Common myeloid progenitor, CD34-positive (primary cell): ENCODE measurements at regions of chr11 and their contacts with region 1.

Region 1: DNA sequence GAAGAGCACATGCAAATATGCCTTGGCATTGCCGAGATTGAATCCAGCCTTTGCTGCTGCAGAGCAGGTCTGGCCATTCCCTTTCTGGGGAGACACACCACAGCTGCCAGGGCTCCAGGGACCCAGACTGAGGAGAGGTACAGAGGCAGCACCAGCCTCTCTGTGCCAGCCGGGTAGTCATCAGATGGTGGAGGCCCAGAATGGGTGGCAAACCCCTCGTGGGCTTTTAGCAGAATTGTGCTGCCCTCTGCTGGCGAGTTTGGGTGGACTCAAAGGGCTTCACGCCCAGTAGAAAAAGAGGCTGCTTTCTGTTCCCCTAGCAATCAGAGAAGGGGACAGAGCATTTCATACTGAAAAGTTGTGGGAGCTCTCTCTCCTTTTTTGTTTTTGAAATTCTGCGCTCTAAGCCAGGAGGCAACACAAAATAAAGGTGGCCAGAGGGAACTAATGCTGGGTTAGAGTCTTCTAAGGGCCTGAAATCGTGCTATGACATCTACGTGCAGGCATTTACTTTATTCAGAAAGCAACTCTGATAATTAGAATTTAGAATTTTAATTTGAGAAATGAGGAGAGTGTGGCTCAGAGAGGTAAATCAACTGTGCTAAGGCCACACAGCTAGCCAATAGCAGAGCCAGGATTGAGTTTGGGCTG is 158.8 kb upstream of the NAV2 start:
- DNase-seq: peak; percentile 69 to 89 (median 84)
- H3K4me3 ChIP-seq: no peak overlapping the region
- H3K27ac ChIP-seq: no peak overlapping the region
- H3K4me1 ChIP-seq: peaks cover 0 to 7% (median 0%) of the 10 kb centered on the region in 4 experiments
- H3K27me3 ChIP-seq: peaks cover 0 to 8% (median 3%) of the 10 kb centered on the region in 5 experiments

Region 2: GRCh38 chr11:19071255-19071654 is 482.6 kb before region 1 on chr11:
- CTCF ChIA-PET with region 1: interaction called, 136 read pairs
- POLR2A ChIA-PET with region 1: no interaction called
- DNase-seq: peak; percentile 78 to 88 (median 88)
- H3K4me3 ChIP-seq: peak overlapping the region in 5 of 7 experiments; percentile 15 to 75 (median 45)
- H3K27ac ChIP-seq: no peak overlapping the region
- H3K4me1 ChIP-seq: no peaks in the 10 kb centered on the region
- H3K27me3 ChIP-seq: no peaks in the 10 kb centered on the region

Region 3: DNA sequence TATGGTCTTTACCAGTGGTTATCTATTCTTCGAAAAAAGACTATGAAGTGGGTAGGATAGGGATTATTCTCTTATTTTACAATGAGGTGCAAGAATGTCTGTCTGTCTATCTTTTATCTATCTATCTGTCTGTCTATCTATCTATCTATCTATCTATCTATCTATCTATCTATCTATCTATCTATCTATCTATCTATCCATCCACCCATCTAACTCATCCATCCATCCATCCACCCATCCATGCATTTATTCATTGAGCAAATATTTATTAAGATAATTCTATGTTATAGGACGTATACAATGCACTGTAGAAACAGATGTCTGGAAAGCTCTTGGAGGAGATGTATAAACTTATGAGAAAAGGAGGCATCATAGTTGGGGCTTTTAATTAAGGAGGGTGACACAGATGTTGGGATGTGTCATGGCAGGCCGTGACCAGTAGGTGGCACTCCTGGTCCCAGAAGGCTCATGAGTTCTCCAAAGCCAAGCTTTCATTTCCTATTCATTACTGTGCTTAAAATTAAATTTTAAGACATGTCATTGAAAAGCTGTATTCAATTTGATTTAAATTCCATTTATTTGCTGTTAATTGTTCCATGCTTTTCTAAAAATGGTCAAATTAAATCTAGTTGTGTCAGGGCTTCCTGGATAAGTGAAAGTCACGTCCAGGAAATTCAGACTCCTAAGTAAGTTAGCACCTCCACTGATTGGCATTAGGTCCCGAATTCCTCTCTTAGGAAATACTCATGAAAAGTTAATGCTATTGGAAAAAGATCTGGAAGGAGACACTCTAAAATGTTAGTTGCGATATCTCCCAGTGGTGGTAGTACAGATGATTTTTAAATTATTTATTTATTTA is 294.1 kb before region 1 on chr11:
- CTCF ChIA-PET with region 1: interaction called, 16 read pairs
- POLR2A ChIA-PET with region 1: no interaction called
- DNase-seq: peak; percentile 61 to 82 (median 74)
- H3K4me3 ChIP-seq: peak overlapping the region in 1 of 7 experiments; percentile 39
- H3K27ac ChIP-seq: no peak overlapping the region
- H3K4me1 ChIP-seq: peaks cover 0 to 1% (median 0%) of the 10 kb centered on the region in 4 experiments
- H3K27me3 ChIP-seq: peaks cover 0 to 2% (median 0%) of the 10 kb centered on the region in 5 experiments

Region 4: DNA sequence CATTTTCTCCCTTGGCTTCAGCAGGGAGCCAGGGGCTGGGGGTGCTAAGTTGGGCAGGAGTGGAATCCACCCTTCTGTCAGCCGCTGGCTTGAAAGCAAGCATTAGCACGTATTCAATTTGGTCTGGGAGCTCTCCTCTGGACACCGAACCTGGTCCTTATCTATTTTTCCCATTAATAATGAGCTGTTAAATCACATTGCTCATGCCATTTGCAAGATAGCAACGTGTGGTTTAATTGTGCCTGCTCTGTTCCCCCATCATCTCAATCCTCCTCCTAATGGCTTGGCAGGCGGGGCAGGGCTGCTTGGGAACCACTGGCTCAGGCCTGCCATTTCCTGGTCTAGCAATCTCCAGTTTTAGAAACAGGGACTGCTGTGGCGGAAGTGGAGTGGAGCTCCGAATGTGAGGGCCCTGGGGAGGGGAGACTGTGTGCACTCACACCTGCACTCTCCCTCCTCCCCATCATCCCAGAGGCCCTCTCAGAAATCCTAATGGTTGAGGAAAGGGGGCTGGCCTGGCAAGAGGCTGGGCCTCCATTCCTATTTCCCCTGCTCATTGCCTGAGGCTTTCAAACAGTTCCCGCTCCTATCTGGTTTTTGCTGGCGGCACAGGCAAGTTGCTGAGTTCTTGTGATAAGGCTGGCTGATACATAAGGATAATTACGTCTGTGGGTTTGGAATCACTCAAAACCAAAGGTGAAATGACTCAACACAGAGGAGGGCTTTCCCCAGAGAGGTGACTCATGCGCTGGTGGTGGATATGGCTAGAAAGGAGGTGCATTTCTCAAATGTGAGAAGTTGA is 111.9 kb before region 1 on chr11:
- CTCF ChIA-PET with region 1: no interaction called
- POLR2A ChIA-PET with region 1: no interaction called
- DNase-seq: peak; percentile 13 to 61 (median 46)
- H3K4me3 ChIP-seq: no peak overlapping the region
- H3K27ac ChIP-seq: no peak overlapping the region
- H3K4me1 ChIP-seq: no peaks in the 10 kb centered on the region
- H3K27me3 ChIP-seq: peaks cover 0 to 8% (median 0%) of the 10 kb centered on the region in 5 experiments

Region 5: GRCh38 chr11:19536131-19536530 is 17.7 kb before region 1 on chr11:
- CTCF ChIA-PET with region 1: interaction called, 11 read pairs
- POLR2A ChIA-PET with region 1: no interaction called
- DNase-seq: no peak
- H3K4me3 ChIP-seq: no peak overlapping the region
- H3K27ac ChIP-seq: no peak overlapping the region
- H3K4me1 ChIP-seq: no peaks in the 10 kb centered on the region
- H3K27me3 ChIP-seq: peaks cover 0 to 4% (median 0%) of the 10 kb centered on the region in 5 experiments

Region 6: DNA sequence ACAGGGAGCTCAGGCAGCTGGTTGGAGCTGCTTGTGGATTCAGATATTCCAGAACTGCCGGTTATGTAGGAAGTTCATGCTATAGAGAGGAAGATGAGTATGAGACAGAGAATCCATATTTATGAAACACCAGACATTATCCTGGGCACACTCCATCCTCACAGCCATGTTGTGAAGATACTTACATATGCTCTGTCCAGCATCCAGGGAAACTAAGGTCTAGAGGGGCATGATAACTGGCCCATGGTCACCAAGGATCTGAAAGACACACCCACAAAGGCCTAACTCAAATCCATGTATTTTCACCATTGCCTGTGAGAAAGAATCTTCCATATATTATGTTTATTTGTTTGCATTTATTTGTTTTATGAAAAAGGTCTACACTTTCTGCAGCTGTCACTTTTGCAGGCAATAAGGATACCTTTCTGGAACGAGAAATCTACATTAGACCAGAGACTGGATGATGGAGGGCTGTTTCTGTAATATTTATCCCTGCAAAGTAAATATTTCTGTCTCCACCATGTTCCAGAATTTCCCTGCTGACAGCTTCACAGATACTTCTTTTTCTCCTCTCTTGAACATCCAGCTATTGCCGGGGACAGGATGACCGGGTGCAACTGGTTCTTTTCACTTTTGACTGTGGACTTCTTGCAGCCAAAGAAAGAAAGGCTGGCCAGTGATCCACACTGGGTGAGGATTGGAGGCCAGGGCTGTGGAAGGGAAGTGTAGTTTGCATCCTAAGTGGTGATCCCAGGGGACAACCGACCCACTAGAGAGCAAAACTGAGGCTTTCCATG is 13.0 kb after region 1 on chr11:
- CTCF ChIA-PET with region 1: interaction called, 25 read pairs
- POLR2A ChIA-PET with region 1: no interaction called
- DNase-seq: no peak
- H3K4me3 ChIP-seq: no peak overlapping the region
- H3K27ac ChIP-seq: no peak overlapping the region
- H3K4me1 ChIP-seq: peaks cover 0 to 8% (median 2%) of the 10 kb centered on the region in 4 experiments
- H3K27me3 ChIP-seq: peaks cover 0 to 11% (median 2%) of the 10 kb centered on the region in 5 experiments

Region 7: DNA sequence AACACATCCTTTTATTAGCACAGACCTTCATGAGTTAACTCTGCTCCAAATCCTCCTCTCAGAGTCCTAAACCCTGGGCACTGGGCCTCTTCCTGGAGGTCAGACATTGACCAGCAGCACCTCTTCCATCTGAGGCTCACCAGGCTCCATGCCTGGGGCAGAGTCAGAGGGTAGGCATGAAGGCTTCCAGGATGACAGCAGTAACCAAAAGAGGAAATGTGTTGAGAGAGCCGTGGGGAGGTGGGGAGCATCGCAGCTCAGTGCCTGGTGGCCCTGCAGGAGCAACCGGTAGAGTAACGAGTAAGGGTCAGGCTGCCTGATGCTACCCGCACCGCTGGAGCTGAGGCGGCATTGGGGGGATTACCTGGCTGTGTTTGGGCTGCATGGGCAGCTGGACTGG is 149.4 kb after region 1 on chr11:
- CTCF ChIA-PET with region 1: no interaction called
- POLR2A ChIA-PET with region 1: no interaction called
- DNase-seq: peak in 2 of 3 donors; percentile 26 to 31
- H3K4me3 ChIP-seq: no peak overlapping the region
- H3K27ac ChIP-seq: no peak overlapping the region
- H3K4me1 ChIP-seq: peaks cover 0 to 1% (median 0%) of the 10 kb centered on the region in 4 experiments
- H3K27me3 ChIP-seq: peaks cover 0 to 2% (median 0%) of the 10 kb centered on the region in 5 experiments

Region 8: GRCh38 chr11:19742588-19743292 is 188.9 kb after region 1 on chr11:
- CTCF ChIA-PET with region 1: interaction called, 83 read pairs
- POLR2A ChIA-PET with region 1: no interaction called
- DNase-seq: peak; percentile 65 to 84 (median 79)
- H3K4me3 ChIP-seq: no peak overlapping the region
- H3K27ac ChIP-seq: no peak overlapping the region
- H3K4me1 ChIP-seq: no peaks in the 10 kb centered on the region
- H3K27me3 ChIP-seq: peaks cover 0 to 2% (median 0%) of the 10 kb centered on the region in 5 experiments

Region 9: DNA sequence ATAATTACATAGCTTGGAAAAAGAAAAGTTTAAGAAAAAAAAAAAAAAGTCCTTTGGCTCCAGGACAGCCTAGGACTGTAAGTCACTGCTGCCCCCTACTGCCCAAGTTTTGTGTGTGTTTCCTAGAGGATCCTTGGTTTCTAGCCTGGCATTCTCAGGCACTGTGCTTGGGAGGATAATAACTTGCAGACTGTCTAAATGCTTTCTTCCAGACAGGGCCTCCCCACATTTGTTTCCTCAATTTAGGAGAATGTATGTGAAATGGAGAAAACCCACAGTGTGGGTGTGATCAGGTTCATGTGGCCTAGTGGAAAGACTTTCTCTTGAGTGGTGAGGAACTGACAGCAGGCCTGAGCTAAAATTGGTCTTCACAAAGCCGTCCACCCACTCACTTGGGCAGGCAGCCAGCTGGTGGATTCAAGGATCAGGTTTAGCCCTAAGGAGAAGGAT is 349.8 kb after region 1 on chr11:
- CTCF ChIA-PET with region 1: interaction called, 58 read pairs
- POLR2A ChIA-PET with region 1: no interaction called
- DNase-seq: peak; percentile 60 to 77 (median 68)
- H3K4me3 ChIP-seq: no peak overlapping the region
- H3K27ac ChIP-seq: no peak overlapping the region
- H3K4me1 ChIP-seq: no peaks in the 10 kb centered on the region
- H3K27me3 ChIP-seq: no peaks in the 10 kb centered on the region